PC-9 (cell line): ENCODE measurements at regions of chr1 and their contacts with region 1.

Region 1: GRCh38 chr1:223199094-223199647 is 56.1 kb upstream of the TLR5 start:
- DNase-seq: no peak
- H3K4me3 ChIP-seq: no peak overlapping the region
- H3K27ac ChIP-seq: no peak overlapping the region
- H3K4me1 ChIP-seq: no peaks in the 10 kb centered on the region
- H3K27me3 ChIP-seq: no peaks in the 10 kb centered on the region
- CTCF ChIP-seq: no peak

Region 2: GRCh38 chr1:223421676-223422075 is 222.5 kb after region 1 on chr1:
- CTCF ChIA-PET with region 1: no interaction called
- POLR2A ChIA-PET with region 1: interaction called, 12 read pairs
- intact Hi-C with region 1: no loop called
- DNase-seq: peak in 1 of 2 experiments; percentile 24
- H3K4me3 ChIP-seq: no peak overlapping the region
- H3K27ac ChIP-seq: no peak overlapping the region
- H3K4me1 ChIP-seq: 0 out of 2 replicates have a peak, but pooled peaks cover 4% of the 10 kb centered on the region
- H3K27me3 ChIP-seq: 0 out of 2 replicates have a peak, but pooled peaks cover 5% of the 10 kb centered on the region
- CTCF ChIP-seq: no peak